Activated CD4-positive, alpha-beta memory T cell treated with anti-CD3 and anti-CD28 coated beads for 36 hours (primary cell): ENCODE measurements at regions of chr19 and their contacts with region 1.

Region 1: DNA sequence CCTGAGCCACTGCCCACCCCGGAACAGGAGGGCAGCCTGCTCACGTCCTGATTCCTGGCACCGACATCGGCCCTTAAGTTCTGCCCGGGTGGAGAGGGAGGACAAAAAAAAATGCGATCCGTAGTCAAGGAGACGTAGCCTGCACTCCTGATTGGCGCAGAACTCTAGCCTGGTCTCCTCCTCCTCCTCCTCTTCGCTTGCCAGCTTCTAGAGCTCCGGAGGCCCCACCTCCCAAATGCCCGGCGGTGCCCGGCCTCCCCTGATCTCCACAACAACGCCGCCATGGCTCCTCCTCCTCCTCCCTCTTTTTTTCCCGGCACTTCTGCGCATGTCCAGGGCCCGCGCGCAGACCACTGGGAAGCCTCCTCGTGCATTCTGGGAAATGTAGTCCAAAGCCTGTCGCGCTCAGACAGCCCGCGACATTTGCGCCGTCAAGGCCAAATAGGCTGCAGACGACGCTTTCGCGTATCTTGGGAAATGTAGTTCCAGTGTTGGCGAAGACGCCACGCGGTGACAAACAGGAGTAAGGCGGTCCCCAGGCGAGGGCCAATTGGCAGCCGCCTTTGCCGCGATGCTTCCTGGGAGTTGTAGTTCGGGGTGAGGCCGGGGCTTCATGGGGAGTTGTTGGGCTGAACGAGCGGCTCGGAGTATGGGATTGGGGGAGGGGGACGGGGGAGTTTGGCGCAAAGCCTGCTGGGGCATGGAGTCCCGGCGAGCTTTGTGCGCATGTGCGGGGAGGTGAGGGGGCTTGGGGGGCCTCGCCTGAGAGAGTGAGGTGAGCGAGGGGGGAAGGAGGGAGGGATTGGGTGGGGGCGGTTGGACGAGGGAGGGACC is at the start of gene ZNF444:
- DNase-seq: peak; percentile 99
- H3K4me3 Mint-ChIP-seq: peak within 1 kb of the TSS; percentile 92
- H3K27ac Mint-ChIP-seq: peak within 1 kb of the TSS; percentile 95
- H3K4me1 Mint-ChIP-seq: peaks cover 31% of the 10 kb centered on the region
- H3K27me3 Mint-ChIP-seq: no peaks in the 10 kb centered on the region
- total RNA-seq, gene ZNF444: 23.1 to 26.1 TPM

Region 2: GRCh38 chr19:56105090-56105701 is 35.6 kb before region 1 on chr19:
- CTCF ChIA-PET with region 1: no interaction called
- POLR2A ChIA-PET with region 1: no interaction called
- intact Hi-C with region 1: loop called (anchors 5 kb)
- DNase-seq: peak; percentile 48
- H3K4me3 Mint-ChIP-seq: no peak overlapping the region
- H3K27ac Mint-ChIP-seq: no peak overlapping the region
- H3K4me1 Mint-ChIP-seq: peaks cover 28% of the 10 kb centered on the region
- H3K27me3 Mint-ChIP-seq: no peaks in the 10 kb centered on the region

Region 3: GRCh38 chr19:56121180-56122167 is 19.3 kb before region 1 on chr19 and contains the start of gene ZNF787:
- CTCF ChIA-PET with region 1: interaction called, 3 read pairs
- POLR2A ChIA-PET with region 1: interaction called, 11 read pairs
- intact Hi-C with region 1: loop called (anchors 1 kb)
- DNase-seq: peak; percentile 97
- H3K4me3 Mint-ChIP-seq: peak within 1 kb of the TSS; percentile 85
- H3K27ac Mint-ChIP-seq: peak within 1 kb of the TSS; percentile 91
- H3K4me1 Mint-ChIP-seq: peaks cover 39% of the 10 kb centered on the region
- H3K27me3 Mint-ChIP-seq: no peaks in the 10 kb centered on the region
- total RNA-seq, gene ZNF787: 25.3 to 25.5 TPM

Region 4: GRCh38 chr19:56393119-56394012 is 252.6 kb after region 1 on chr19 and contains the start of gene ZNF582:
- CTCF ChIA-PET with region 1: no interaction called
- POLR2A ChIA-PET with region 1: no interaction called
- intact Hi-C with region 1: loop called (anchors 5 kb)
- DNase-seq: peak; percentile 94
- H3K4me3 Mint-ChIP-seq: peak within 1 kb of the TSS; percentile 77
- H3K27ac Mint-ChIP-seq: peak within 1 kb of the TSS; percentile 84
- H3K4me1 Mint-ChIP-seq: peaks cover 7% of the 10 kb centered on the region
- H3K27me3 Mint-ChIP-seq: no peaks in the 10 kb centered on the region
- total RNA-seq, gene ZNF582: 0.58 to 0.71 TPM